Activated B cell treated with CpG ODN at 0.5 μM for 24 hours (primary cell): ENCODE measurements at regions of chr3 and their contacts with region 1.

Region 1: GRCh38 chr3:36993326-36994283 is at the start of gene MLH1:
- DNase-seq: peak; percentile 90
- ATAC-seq: peak; percentile 86
- H3K4me3 Mint-ChIP-seq: no peak within 1 kb of the TSS
- H3K27ac Mint-ChIP-seq: no peak within 1 kb of the TSS
- H3K4me1 Mint-ChIP-seq: peaks cover 29% of the 10 kb centered on the region
- H3K27me3 Mint-ChIP-seq: no peaks in the 10 kb centered on the region
- CTCF ChIP-seq: no peak
- total RNA-seq, gene MLH1: 45.8 and 46.2 TPM in 2 replicates

Region 2: DNA sequence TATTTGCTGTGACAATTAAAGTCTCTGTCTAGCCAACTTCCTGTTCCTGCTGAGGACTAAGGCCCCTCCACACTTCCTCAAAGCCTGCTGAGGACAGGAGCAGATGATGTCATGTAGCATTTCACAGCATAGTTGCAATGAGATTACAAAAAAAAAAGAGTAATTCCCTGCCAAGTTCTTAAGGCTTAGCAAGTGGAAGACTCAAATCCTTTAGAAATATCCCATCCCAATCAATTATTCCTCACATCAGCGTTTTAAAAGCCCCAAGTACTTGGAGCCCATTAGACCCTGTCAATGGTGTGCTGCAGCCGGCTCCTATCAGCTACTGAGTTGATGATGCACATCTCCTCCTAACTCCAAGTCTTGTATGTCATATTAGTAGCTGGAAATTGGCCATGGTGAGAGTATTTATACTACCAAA is 100.5 kb before region 1 on chr3:
- CTCF ChIA-PET with region 1: interaction called, 4 read pairs
- POLR2A ChIA-PET with region 1: interaction called, 32 read pairs
- intact Hi-C with region 1: loop called (anchors 1 kb)
- DNase-seq: no peak
- ATAC-seq: peak; percentile 35
- H3K4me3 Mint-ChIP-seq: peak overlapping the region; percentile 78
- H3K27ac Mint-ChIP-seq: peak overlapping the region; percentile 97
- H3K4me1 Mint-ChIP-seq: peaks cover 94% of the 10 kb centered on the region
- H3K27me3 Mint-ChIP-seq: no peaks in the 10 kb centered on the region
- CTCF ChIP-seq: no peak

Region 3: GRCh38 chr3:36911990-36912804 is 81.4 kb before region 1 on chr3:
- CTCF ChIA-PET with region 1: interaction called, 3 read pairs
- POLR2A ChIA-PET with region 1: interaction called, 18 read pairs
- intact Hi-C with region 1: loop called (anchors 1 kb)
- DNase-seq: no peak
- ATAC-seq: peak; percentile 78
- H3K4me3 Mint-ChIP-seq: peak overlapping the region; percentile 41
- H3K27ac Mint-ChIP-seq: peak overlapping the region; percentile 93
- H3K4me1 Mint-ChIP-seq: peaks cover 69% of the 10 kb centered on the region
- H3K27me3 Mint-ChIP-seq: no peaks in the 10 kb centered on the region
- CTCF ChIP-seq: no peak

Region 4: DNA sequence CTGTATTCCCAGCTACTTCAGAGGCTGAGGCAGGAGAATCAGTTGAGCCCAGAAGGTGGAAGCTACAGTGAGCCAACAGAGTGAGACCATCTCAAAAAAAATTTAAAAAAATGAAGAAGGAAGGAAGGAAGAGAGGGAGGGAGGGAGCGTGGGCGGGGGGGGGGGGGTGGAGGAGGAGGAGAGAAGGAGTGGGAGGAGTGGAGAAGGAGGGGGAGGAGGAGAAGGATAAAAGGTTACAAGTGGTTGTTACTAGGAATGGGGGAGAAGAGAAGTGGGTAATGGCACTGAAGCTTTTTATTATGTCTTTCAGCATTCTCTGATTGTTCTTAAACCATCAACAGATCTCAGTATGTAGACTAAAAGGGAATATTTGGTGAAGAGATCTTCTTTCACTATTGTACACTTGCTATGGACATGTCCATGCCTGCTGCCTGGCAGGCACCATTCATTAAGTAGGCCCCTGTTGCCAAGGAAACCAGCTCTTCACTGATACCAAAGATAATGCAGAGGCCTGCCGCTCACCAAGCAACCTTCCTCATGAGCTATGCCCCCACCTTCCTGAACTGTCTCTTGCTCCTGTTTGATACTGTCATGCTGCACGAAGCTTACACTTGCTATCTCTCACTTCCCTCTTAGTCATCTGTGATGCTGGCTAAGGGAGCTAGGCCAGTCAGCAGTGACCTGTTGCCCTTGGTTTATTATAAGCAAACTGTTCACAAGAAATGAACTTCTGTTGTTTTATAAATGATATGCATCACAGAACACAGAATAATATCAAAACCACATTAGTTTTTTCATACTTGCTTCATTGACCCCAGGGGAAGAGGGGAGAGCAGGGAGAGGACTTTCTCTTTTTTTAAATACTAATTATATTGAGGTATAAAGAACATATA is 23.8 kb before region 1 on chr3:
- CTCF ChIA-PET with region 1: interaction called, 10 read pairs
- POLR2A ChIA-PET with region 1: interaction called, 33 read pairs
- intact Hi-C with region 1: loop called (anchors 1 kb)
- DNase-seq: peak; percentile 26
- ATAC-seq: peak; percentile 99
- H3K4me3 Mint-ChIP-seq: peak overlapping the region; percentile 39
- H3K27ac Mint-ChIP-seq: peak overlapping the region; percentile 93
- H3K4me1 Mint-ChIP-seq: peaks cover 30% of the 10 kb centered on the region
- H3K27me3 Mint-ChIP-seq: no peaks in the 10 kb centered on the region
- CTCF ChIP-seq: no peak

Region 5: GRCh38 chr3:37054370-37054769 is 60.8 kb after region 1 on chr3:
- CTCF ChIA-PET with region 1: no interaction called
- POLR2A ChIA-PET with region 1: no interaction called
- intact Hi-C with region 1: loop called (anchors 1 kb)
- DNase-seq: no peak
- ATAC-seq: peak; percentile 78
- H3K4me3 Mint-ChIP-seq: no peak overlapping the region
- H3K27ac Mint-ChIP-seq: peak overlapping the region; percentile 81
- H3K4me1 Mint-ChIP-seq: peaks cover 19% of the 10 kb centered on the region
- H3K27me3 Mint-ChIP-seq: no peaks in the 10 kb centered on the region
- CTCF ChIP-seq: no peak